GM10248 (cell line): ENCODE measurements at regions of chr15 and their contacts with region 1.

Region 1: GRCh38 chr15:101008158-101009139 is 89.3 kb downstream of the LRRK1 start:
- DNase-seq: peak; percentile 90
- CTCF ChIP-seq: peak; percentile 97

Region 2: DNA sequence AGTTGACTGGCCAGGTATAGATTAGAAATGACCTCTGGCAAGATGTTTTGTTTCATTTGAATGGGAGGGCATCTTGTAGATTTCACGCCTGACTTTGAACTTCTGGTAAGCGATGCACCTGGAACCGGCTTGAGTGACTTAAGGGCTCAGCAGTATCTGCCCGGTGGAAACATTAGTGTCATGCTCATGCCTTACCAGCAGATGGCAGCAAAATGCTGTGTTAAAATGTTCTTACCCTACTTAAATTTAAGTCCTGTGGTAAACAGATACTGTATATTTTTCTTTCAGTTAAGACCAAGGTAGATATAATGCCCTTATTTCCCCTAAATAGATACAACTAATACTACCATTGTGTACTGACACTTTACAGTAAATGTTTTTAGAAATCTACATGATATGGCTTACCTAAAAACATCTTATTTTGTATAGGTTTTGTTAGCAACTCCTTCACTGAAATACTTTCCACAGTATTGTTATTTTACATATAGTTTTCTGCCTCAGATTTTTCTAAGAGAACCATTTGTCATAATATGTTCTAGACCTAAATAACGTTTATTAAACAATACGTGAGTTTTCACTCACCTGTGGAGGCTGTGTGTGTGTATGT is 380.6 kb before region 1 on chr15:
- CTCF ChIA-PET with region 1: interaction called, 21 read pairs
- POLR2A ChIA-PET with region 1: no interaction called
- DNase-seq: peak; percentile 57
- CTCF ChIP-seq: peak; percentile 77

Region 3: GRCh38 chr15:100918034-100918689 is 90.3 kb before region 1 on chr15:
- CTCF ChIA-PET with region 1: interaction called, 550 read pairs
- POLR2A ChIA-PET with region 1: interaction called, 3 read pairs
- DNase-seq: peak; percentile 90
- CTCF ChIP-seq: peak; percentile 99

Region 4: DNA sequence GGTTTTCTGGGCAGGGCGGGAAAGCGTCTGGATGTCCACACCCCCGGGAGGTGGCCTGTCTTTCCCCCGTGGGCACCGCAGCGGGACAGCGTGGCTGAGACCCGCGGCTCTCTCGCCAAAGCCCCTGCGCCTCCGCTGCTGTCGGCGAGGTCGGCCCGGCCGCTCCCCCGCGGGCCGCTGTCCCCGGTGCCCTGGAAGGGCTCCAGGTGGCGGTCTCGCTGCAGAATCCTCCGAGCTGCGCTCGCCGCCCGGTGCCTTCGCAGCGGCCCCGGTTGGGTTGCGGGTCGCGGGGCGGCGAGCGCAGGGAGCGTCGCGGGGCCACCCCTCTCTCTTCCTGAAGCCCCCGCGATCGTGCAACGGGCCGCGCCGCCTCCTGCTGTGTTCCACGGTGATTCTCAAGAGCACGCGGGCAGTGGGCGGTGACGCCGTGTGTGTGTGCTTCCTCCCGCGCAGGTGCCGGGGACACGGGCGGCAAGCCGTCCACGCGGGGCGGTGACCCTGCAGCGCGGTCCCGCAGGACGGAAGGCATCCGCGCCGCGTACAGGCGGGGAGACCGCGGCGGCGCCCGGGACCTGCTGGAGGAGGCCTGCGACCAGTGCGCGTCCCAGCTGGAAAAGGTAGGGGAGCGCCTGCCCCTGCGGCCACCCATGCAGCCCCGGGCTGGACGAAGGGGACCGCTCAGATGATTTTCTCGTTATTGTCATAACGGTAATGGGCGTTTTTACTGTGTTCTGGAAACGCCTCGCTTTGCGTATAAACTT is 34.9 kb before region 1 on chr15:
- CTCF ChIA-PET with region 1: interaction called, 43 read pairs
- POLR2A ChIA-PET with region 1: no interaction called
- DNase-seq: peak; percentile 43
- CTCF ChIP-seq: no peak

Region 5: DNA sequence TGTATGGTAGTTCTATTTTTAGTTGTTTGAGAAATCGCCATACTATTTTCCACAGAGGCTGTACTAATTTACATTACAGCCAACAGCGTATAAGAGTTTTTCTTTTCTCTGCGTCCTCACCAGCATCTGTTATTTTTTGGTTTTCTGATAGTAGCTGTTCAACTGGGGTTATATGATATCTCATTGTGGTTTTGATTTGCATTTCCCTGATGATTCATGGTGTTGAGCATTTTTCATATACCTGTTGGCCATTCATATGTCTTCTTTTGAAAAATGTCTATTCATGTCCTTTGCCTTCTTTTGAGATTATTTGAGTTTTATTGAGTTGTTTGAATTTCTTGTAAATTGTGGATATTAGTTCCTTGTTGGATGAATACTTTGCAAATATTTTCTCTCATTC is 25.4 kb after region 1 on chr15:
- CTCF ChIA-PET with region 1: interaction called, 13 read pairs
- POLR2A ChIA-PET with region 1: no interaction called
- DNase-seq: no peak
- CTCF ChIP-seq: no peak

Region 6: DNA sequence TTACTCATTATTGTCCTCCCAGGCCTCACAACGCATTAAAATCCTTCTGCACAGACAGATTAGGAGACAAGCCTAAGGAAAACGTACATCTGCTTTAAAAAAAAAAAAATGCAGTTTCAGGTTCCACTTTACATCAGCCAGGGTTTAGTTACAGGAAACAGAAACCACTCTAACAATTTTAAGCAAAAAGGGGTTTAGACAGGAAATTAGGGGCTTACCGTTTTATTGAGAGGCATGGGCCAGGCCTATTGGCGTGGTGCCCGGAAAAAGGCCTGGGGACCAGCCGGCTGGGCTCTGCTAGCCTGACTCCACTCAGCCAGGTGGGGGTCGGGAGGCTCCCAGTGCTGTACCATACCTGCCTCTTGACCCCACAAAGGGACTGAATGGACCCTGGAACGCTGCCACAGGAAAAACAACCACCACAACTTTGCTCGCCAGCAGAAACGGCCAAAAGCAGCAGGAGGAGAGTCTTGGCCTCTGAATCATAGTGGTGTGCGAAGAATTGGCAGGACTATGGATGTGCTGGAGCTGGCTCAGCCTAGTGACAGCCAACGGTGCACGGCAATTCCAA is 119.1 kb after region 1 on chr15:
- CTCF ChIA-PET with region 1: no interaction called
- POLR2A ChIA-PET with region 1: no interaction called
- DNase-seq: peak; percentile 61
- CTCF ChIP-seq: no peak